ENCODE measurements at regions of chr10 and their contacts with region 1.

Region 1: DNA sequence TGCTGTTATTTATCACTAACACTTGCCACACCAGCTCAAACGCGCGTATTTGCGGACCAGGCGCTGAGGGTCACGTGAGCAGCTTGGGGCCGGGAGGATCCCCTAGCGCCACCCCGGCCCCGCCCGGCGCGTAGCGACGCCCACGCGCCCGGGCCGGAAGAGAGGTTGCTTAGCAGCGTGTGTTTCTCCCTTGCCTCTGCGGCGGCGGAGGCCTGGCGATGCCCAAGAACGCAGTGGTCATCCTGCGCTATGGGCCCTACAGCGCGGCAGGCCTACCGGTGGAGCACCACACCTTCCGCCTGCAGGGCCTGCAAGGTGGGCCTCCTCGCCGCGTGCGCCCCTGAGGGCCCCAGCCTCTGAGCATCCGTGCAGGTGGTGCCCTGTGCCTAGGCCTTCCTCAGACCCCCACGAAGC is at the start of gene C10orf53:
- DNase-seq: no peak
- H3K4me3 ChIP-seq: no peak within 1 kb of the TSS
- CTCF ChIP-seq: no peak
- POLR2A ChIP-seq: no peak
- total RNA-seq, gene C10orf53: not detected

Region 2: DNA sequence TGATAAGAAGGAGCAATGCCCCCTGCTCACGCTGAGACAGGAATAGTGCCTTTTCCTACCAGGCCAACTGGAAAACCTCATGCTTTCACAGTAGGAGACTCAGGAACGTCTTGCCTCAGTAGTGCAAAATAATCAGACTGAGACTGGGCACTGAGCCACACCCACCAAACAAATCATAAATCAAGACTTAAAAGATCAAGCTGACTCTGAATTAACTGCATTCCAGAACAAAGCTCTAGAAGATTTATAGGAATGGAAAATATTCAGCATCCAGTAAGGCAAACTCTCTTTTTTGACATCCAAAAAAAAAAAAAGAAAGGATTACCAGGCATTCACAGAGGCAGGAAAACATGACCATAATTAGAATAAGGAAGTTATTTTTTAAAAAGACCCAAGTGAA is 99.9 kb before region 1 on chr10:
- intact Hi-C with region 1: loop called (anchors 5 kb)
- DNase-seq: no peak
- H3K4me3 ChIP-seq: no peak overlapping the region
- CTCF ChIP-seq: no peak
- POLR2A ChIP-seq: no peak

Region 3: DNA sequence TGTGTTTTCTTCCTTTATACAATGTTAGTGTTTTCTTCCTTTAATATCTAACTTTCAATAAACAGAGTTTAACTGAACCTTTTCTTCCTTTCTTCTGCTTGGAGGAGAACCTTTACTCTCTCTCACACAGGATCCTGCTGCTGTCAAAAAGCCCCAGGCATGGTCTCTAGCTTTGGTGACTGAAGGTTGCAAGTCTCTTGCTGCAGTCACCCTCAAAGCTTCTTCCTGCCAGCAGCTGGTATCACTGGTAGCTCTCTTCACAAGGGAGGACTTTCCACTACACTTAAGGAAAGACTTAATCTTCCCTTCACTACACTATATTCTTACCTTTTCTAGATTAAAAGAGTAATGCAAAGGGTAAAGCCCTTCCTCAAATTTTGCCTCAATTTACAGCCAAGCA is 790.9 kb after region 1 on chr10:
- intact Hi-C with region 1: no loop called
- DNase-seq: no peak
- H3K4me3 ChIP-seq: no peak overlapping the region
- CTCF ChIP-seq: no peak
- POLR2A ChIP-seq: no peak

Measured in lower leg skin (tissue), 4 donors.